ENCODE measurements at regions of chr13 and their contacts with region 1.

Region 1: GRCh38 chr13:26186118-26186870 is 35.8 kb downstream of the RNF6 start:
- DNase-seq: peak; percentile 92
- H3K4me3 Mint-ChIP-seq: peak overlapping the region; percentile 83
- H3K27ac Mint-ChIP-seq: peak overlapping the region; percentile 96
- H3K4me1 Mint-ChIP-seq: peaks cover 22% of the 10 kb centered on the region
- H3K27me3 Mint-ChIP-seq: peaks cover 4% of the 10 kb centered on the region

Region 2: GRCh38 chr13:26074706-26075105 is 111.6 kb before region 1 on chr13:
- CTCF ChIA-PET with region 1: no interaction called
- DNase-seq: no peak
- H3K4me3 Mint-ChIP-seq: no peak overlapping the region
- H3K27ac Mint-ChIP-seq: no peak overlapping the region
- H3K4me1 Mint-ChIP-seq: peaks cover 5% of the 10 kb centered on the region
- H3K27me3 Mint-ChIP-seq: peaks cover 46% of the 10 kb centered on the region

Region 3: DNA sequence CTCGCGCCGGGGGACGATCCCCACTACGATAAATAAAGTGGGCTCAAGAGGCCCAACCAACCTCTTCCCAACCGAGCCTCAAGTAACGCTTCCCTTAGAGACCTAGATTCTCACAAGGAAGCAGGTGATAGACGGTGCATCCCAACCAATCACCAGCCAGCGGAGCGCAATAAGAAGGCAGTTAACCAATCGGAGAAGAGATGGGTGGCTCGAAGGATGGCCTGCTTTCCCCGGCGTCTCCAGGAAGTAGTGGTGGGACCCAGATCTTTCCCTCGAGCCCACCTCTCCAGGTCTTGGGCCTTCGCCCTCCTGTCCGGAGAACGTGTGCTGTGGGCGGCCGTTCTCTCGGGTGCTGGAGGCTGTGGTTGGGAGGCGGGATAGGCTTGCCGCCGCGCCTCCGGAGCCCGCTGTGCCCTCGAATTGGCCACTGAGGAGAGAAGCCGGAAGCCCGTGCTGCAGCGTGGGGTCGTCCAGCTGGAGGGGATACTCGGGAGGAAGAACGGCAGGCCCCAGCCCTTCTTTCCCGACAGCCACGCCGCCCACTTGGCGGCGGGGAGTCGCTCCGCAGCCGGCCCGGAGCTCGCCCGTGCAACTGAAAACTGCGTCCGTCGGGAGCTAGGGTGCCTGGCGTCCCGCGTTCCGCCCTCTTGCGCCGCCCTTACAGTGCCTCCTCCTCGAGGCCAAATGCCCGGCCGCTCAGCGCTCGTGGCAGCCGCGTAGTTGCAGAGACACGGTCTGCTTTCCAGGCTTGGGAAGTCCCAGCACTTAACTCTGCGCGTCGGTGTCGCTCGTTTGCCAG is 35.6 kb after region 1 on chr13 and contains the start of gene RNF6:
- CTCF ChIA-PET with region 1: interaction called, 19 read pairs
- DNase-seq: peak; percentile 94
- H3K4me3 Mint-ChIP-seq: peak within 1 kb of the TSS; percentile 93
- H3K27ac Mint-ChIP-seq: peak within 1 kb of the TSS; percentile 100
- H3K4me1 Mint-ChIP-seq: peaks cover 37% of the 10 kb centered on the region
- H3K27me3 Mint-ChIP-seq: peaks cover 9% of the 10 kb centered on the region

Region 4: GRCh38 chr13:26482451-26483197 is 296.3 kb after region 1 on chr13:
- CTCF ChIA-PET with region 1: interaction called, 28 read pairs
- DNase-seq: peak; percentile 79
- H3K4me3 Mint-ChIP-seq: no peak overlapping the region
- H3K27ac Mint-ChIP-seq: peak overlapping the region; percentile 19
- H3K4me1 Mint-ChIP-seq: peaks cover 11% of the 10 kb centered on the region
- H3K27me3 Mint-ChIP-seq: peaks cover 6% of the 10 kb centered on the region

Region 5: GRCh38 chr13:26502826-26503225 is 316.5 kb after region 1 on chr13:
- CTCF ChIA-PET with region 1: interaction called, 124 read pairs
- DNase-seq: no peak
- H3K4me3 Mint-ChIP-seq: no peak overlapping the region
- H3K27ac Mint-ChIP-seq: no peak overlapping the region
- H3K4me1 Mint-ChIP-seq: peaks cover 2% of the 10 kb centered on the region
- H3K27me3 Mint-ChIP-seq: no peaks in the 10 kb centered on the region

Region 6: DNA sequence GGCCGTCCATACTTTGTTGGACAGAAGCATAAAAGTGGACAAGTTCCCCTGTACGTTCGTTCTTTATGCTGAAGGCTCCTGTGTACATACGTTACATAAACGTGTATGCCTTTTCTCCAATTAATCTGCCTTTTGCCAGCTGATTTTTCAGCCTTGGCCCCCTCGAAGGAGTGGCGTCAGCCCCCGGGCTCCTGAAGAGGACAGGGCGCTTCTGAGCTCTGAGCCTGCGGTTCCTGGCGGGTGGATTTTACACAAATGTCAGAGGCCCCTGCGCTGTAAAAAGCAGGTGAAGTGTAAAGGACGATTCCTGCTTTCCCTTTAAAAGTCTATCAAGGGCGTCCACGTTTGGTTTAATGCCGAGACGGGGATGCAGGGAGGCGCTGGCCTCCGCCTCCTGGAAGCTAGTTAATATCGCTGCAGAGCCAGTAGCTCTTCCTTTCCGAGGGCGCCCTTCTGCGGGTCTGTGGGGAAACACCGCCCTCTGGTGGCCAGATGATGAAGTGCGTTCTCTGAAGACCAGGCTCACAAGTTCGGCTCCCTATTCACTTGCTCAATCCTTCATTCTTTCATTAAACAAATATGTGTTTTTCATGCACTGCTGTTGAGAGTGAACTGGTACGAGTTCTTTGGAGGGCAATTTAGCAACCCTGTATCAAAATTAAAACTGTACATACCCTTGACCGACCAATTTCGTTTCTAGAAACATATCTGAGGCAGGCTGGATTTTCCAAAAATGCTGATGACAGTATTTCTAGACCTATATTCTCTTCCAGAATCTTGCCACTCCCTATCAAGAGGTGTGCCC is 512.3 kb after region 1 on chr13:
- CTCF ChIA-PET with region 1: interaction called, 100 read pairs
- DNase-seq: peak; percentile 83
- H3K4me3 Mint-ChIP-seq: no peak overlapping the region
- H3K27ac Mint-ChIP-seq: no peak overlapping the region
- H3K4me1 Mint-ChIP-seq: no peaks in the 10 kb centered on the region
- H3K27me3 Mint-ChIP-seq: peaks cover 11% of the 10 kb centered on the region

Measured in activated naive CD4-positive, alpha-beta T cell treated with anti-CD3 and anti-CD28 coated beads, Interleukin-2, amount 10 ng/mL, durations not matched to agents 7 days and 5 days (primary cell).